Dorsolateral prefrontal cortex (tissue), 120 donors: ENCODE measurements at regions of chr3 and their contacts with region 1.

Region 1: DNA sequence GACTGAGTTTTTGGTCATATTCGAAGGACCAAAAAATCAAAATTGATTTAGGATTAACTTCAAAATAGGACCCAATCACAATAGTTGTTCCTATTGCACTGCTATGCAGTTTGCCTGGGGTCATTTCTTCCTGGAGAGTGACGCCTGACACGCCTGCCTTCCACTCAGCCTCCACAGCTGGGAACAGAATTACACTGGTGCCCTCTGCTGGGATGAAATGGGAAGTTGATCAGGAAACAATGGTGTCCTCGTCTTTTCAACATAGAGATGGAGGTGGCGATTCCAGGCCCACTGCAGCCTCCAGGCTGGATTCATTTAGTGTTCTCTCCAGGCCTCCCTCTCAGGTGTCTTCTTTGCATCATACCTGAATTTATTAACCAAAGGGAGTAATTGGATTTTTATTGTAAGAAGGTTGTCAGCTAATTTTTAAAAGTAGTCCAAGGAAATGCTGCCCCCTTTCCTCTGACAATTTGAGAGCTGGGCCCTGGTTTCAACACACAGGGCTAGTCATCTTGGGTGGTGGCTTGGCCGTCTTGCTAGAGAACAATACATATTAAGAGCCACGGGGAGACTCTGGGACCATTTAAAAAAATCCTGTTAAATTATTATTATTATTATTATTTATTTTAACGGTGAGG is 69.7 kb downstream of the GAP43 start:
- DNase-seq: peak; percentile 35 to 85 (median 70)
- H3K4me3 ChIP-seq: peak overlapping the region in 10 of 59 donors; percentile 14 to 54 (median 42)
- H3K27ac ChIP-seq: peak overlapping the region in 36 of 59 donors; percentile 1 to 69 (median 40)
- H3K27me3 ChIP-seq: no peaks in the 10 kb centered on the region
- CTCF ChIP-seq: peak; percentile 41 to 96 (median 88)

Region 2: DNA sequence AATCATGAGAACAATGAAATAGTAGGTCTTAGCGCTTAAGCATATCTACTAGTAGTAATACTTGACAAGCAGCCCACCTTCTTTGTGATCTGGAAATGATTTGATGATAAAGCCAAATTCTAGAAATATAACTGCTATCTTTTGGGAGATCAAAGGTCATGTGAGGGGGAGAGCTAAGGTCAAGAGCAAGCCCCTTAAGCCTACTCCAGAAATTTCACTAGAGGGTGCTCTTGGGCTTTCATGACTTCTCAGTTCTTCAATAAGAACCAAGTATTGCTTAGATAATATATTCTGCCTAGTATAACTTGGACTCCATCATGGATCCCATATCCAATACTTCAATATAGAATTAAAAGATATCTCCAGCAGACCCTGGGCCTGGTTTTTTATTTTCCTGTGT is 865.5 kb before region 1 on chr3:
- intact Hi-C with region 1: loop called in 1 of 2 experiments (anchors 10 kb)
- DNase-seq: no peak
- H3K4me3 ChIP-seq: no peak overlapping the region
- H3K27ac ChIP-seq: peak overlapping the region in 10 of 59 donors; percentile 2 to 47 (median 24)
- H3K27me3 ChIP-seq: no peaks in the 10 kb centered on the region
- CTCF ChIP-seq: peak; percentile 50 to 87 (median 71)

Region 3: DNA sequence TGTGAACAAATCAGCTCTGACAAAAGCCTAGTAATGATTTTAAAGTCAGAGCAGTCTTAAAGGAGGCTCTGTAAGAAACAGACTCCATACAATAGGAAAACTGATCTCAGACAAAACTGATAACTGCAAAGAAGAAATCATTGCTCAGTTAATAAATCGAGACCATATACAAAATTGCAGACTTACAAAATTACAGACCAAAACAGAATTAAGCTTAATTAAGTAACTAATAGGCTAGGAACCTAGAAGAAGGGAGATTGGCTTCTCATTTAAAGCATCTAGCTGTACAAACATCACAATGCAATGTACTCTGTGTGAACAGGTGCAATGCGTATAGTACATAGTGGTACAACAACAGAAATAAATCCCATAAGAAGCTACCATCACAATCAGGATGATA is 592.2 kb before region 1 on chr3:
- intact Hi-C with region 1: no loop called
- DNase-seq: no peak
- H3K4me3 ChIP-seq: peak overlapping the region in 55 of 59 donors; percentile 8 to 67 (median 49)
- H3K27ac ChIP-seq: peak overlapping the region in 55 of 59 donors; percentile 11 to 89 (median 80)
- H3K27me3 ChIP-seq: no peaks in the 10 kb centered on the region
- CTCF ChIP-seq: peak in 1 of 56 donors; percentile 5

Region 4: DNA sequence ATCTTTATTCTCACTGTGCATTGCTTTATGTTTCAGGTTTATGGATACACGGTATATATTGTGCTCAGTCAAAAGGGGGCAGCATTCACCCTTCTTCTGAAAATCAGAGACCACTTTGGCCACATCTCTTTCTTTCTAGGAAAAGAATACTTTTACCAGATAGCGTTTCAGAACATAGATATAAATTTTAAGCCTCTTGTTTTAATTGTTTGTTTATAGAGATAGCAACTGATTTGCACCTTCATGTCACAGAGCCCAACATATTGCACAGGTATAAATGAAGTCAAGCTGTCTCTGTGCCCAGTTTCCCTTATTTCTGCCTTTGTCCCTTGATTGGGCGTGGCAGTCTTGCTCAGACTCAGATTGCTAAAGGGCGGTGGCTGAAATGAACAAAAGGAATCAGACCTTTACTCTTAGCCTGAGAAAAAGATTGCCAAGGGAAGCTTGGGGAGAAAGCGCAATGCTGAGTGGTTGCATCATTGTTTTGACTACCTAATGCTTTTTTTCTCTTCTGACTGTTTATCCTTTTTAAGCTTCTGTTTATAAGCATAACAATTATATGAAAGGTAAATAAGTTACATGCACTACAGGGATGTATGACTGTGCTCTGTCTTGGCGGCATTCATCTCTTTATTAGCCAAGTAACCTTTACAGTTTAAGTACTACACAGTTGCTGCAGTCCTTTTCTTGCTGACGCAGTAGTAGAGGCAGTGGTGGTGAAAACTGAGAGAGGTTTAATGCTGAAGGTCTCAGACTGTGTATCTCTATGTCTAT is 475.1 kb before region 1 on chr3:
- intact Hi-C with region 1: loop called (anchors 5 kb)
- DNase-seq: peak in 1 of 10 donors; percentile 42
- H3K4me3 ChIP-seq: peak overlapping the region in 3 of 59 donors; percentile 2 to 24 (median 8)
- H3K27ac ChIP-seq: no peak overlapping the region
- H3K27me3 ChIP-seq: peaks cover 0 to 4% (median 0%) of the 10 kb centered on the region in 45 donors
- CTCF ChIP-seq: peak; percentile 57 to 84 (median 72)